A673 (cell line): ENCODE measurements at regions of chr19 and their contacts with region 1.

Region 1: GRCh38 chr19:10936661-10937084 is 8.1 kb downstream of the TIMM29 start:
- DNase-seq: peak; percentile 89
- H3K4me3 ChIP-seq: peak overlapping the region; percentile 15
- H3K27ac ChIP-seq: no peak overlapping the region
- H3K4me1 ChIP-seq: no peaks in the 10 kb centered on the region
- H3K27me3 ChIP-seq: no peaks in the 10 kb centered on the region
- CTCF ChIP-seq: peak; percentile 64

Region 2: GRCh38 chr19:10888421-10888866 is 48.2 kb before region 1 on chr19:
- CTCF ChIA-PET with region 1: interaction called, 6 read pairs
- POLR2A ChIA-PET with region 1: interaction called, 12 read pairs
- intact Hi-C with region 1: no loop called
- DNase-seq: peak; percentile 82
- H3K4me3 ChIP-seq: no peak overlapping the region
- H3K27ac ChIP-seq: peak overlapping the region; percentile 76
- H3K4me1 ChIP-seq: peaks cover 44% of the 10 kb centered on the region
- H3K27me3 ChIP-seq: no peaks in the 10 kb centered on the region
- CTCF ChIP-seq: no peak

Region 3: DNA sequence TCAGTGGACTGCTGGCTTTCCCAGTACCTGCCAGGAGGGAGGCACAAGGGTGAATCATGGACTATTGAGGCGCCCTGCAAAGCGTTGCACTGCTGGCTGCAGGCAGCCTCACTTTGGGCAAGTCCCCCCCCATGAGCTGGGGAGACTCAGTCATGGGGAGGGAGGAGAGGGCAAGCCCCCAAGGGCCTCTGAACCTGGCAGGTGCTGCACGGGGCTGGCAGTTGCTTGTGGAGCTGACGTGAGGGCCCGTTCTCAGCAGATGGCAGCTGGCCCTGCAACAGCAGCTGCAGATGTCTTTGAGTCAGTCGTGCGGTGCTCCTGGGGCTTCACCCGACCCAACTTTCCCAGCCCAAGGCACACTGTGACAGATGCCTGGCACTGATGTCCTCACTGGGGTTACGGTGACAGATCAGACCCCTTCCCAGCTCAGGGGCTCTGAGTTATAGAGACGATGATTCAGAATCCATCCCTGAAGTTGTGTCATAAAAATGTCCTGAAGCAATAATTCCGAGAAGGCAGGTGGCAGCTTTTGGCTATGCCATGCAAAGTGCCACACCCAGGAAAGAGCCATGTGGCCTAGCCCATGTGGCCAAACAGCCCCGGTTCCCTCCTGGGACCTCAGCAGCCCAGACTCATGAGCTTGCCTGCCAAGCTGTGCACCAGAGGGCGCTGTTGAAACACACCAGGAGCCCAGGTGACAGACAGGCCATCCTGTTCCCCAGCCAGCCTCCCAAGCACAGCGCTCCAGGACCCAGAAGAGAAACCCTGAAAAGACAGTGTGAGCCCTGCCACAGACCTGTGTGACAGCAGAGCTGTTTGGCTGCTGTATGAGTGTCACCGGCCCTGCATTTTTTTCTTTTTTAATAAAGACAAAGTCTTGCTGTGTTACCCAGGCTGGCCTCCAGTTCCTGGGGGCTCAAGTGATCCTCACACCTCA is 99.0 kb after region 1 on chr19:
- CTCF ChIA-PET with region 1: interaction called, 20 read pairs
- POLR2A ChIA-PET with region 1: no interaction called
- intact Hi-C with region 1: no loop called
- DNase-seq: peak; percentile 94
- H3K4me3 ChIP-seq: no peak overlapping the region
- H3K27ac ChIP-seq: no peak overlapping the region
- H3K4me1 ChIP-seq: no peaks in the 10 kb centered on the region
- H3K27me3 ChIP-seq: no peaks in the 10 kb centered on the region
- CTCF ChIP-seq: peak; percentile 94

Region 4: GRCh38 chr19:11053817-11054195 is 117.1 kb after region 1 on chr19:
- CTCF ChIA-PET with region 1: no interaction called
- POLR2A ChIA-PET with region 1: no interaction called
- intact Hi-C with region 1: no loop called
- DNase-seq: no peak
- H3K4me3 ChIP-seq: no peak overlapping the region
- H3K27ac ChIP-seq: no peak overlapping the region
- H3K4me1 ChIP-seq: no peaks in the 10 kb centered on the region
- H3K27me3 ChIP-seq: no peaks in the 10 kb centered on the region
- CTCF ChIP-seq: no peak

Region 5: GRCh38 chr19:11130824-11131455 is 194.3 kb after region 1 on chr19:
- CTCF ChIA-PET with region 1: interaction called, 6 read pairs
- POLR2A ChIA-PET with region 1: no interaction called
- intact Hi-C with region 1: loop called (anchors 5 kb)
- DNase-seq: peak; percentile 77
- H3K4me3 ChIP-seq: no peak overlapping the region
- H3K27ac ChIP-seq: no peak overlapping the region
- H3K4me1 ChIP-seq: no peaks in the 10 kb centered on the region
- H3K27me3 ChIP-seq: no peaks in the 10 kb centered on the region
- CTCF ChIP-seq: peak; percentile 76